Cardiac septum (tissue), 1 donor: ENCODE measurements at regions of chr2 and their contacts with region 1.

Region 1: GRCh38 chr2:27771548-27772335 is at the start of gene MRPL33:
- DNase-seq: peak; percentile 97
- total RNA-seq, gene MRPL33: 258 TPM

Region 2: DNA sequence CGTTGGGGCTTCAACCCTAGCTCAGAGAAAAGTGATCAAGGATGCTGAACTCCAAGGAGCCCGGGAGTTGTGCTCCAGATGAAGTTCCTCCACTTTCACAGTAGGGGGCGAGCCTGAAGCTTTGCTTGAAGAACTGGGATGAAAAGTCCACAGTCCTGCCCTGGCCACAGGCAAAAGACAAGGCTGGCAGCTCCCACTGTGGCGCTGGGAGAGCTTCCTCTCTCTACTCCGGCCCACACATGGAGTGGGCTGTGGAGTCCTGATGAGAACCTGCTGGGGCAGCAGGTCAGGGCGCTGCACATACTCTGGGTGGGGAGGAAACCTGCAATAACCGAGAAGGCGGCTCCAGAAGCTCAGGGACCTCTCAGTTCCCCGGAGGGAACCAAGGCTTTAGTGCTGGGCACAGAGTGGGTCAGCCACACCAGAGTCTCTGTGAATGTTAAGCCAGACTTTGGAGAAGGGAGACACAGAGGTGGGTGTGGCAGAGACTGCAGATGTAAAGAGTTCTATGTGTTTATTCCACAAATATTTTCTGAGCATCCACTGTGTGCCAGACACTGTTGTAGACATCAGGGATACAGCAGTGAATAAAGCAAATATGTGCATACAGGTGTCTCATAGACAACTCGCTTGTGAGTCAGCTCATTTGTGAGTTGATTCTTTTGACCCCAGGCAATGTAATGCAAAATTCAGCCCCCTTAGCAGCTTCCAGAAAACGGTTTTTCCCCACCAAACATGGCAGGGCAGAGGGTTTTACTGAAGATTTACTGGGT is 48.2 kb before region 1 on chr2:
- intact Hi-C with region 1: loop called (anchors 1 kb)
- DNase-seq: no peak

Region 3: GRCh38 chr2:27735263-27735953 is 36.3 kb before region 1 on chr2:
- intact Hi-C with region 1: loop called (anchors 5 kb)
- DNase-seq: peak; percentile 92